Adrenal gland (tissue), 19 donors: ENCODE measurements at regions of chr15 and their contacts with region 1.

Region 1: GRCh38 chr15:58999694-59000093 is 12.2 kb downstream of the RNF111 start:
- DNase-seq: no peak
- H3K4me3 ChIP-seq: no peak overlapping the region
- H3K27ac ChIP-seq: no peak overlapping the region
- H3K4me1 ChIP-seq: peaks cover 0 to 38% of the 10 kb centered on the region in 2 donors
- H3K27me3 ChIP-seq: no peaks in the 10 kb centered on the region
- CTCF ChIP-seq: no peak
- POLR2A ChIP-seq: no peak

Region 2: GRCh38 chr15:59104912-59105732 is 105.4 kb after region 1 on chr15 and contains the start of gene CCNB2:
- intact Hi-C with region 1: loop called in 1 of 2 experiments (anchors 10 kb)
- DNase-seq: peak; percentile 84 to 94 (median 87)
- H3K4me3 ChIP-seq: peak within 1 kb of the TSS; percentile 14 to 61 (median 30)
- H3K27ac ChIP-seq: peak within 1 kb of the TSS in 1 of 5 donors; percentile 42
- H3K4me1 ChIP-seq: peaks cover 0 to 6% of the 10 kb centered on the region in 2 donors
- H3K27me3 ChIP-seq: no peaks in the 10 kb centered on the region
- CTCF ChIP-seq: no peak
- POLR2A ChIP-seq: peak in 1 of 2 donors; percentile 47
- total RNA-seq, gene CCNB2: 0.88 to 15.4 (median 1.4) TPM

Region 3: DNA sequence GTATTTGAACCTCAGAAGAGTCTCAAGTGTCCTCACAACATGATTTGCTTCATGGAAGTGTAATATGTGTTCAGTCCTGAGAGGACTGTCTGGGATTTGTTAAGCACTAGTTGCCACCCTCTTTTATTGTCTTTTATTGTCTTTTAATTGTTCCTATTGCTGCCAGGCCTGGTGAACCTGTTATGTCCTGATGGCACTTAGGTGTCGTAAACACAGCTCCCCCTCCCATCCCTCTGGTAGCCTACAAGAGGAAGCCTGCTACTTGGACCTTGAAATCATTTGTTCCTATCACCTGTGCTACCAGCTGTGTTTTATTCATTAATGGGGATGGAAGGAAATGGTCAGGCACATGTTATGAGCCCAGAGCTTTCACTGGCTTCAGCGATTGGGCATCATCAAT is 124.6 kb after region 1 on chr15:
- intact Hi-C with region 1: no loop called
- DNase-seq: no peak
- H3K4me3 ChIP-seq: no peak overlapping the region
- H3K27ac ChIP-seq: no peak overlapping the region
- H3K4me1 ChIP-seq: no peaks in the 10 kb centered on the region
- H3K27me3 ChIP-seq: no peaks in the 10 kb centered on the region
- CTCF ChIP-seq: no peak
- POLR2A ChIP-seq: no peak